ENCODE measurements at regions of chr5 and their contacts with region 1.

Region 1: DNA sequence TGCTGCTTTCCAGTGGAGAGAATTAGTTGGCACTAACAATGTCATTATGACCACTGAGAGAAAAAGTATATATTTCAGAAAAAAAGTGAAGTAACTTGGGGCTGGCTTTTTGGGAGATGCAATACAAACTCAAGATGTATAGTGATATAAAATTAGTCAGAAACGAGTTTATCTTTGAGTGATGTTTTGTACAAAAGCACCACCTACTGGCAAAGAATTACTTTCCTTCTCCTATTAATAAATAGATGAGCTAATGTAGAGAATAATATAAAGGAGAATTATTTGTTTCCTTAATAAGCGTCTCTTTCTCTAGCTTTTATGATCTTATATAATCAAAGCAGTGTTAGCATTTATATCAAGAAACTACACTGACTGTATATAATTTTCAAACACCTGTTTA is 158.8 kb downstream of the MEF2C start:
- H3K4me3 Mint-ChIP-seq: no peak overlapping the region
- H3K27ac Mint-ChIP-seq: no peak overlapping the region
- H3K4me1 Mint-ChIP-seq: no peaks in the 10 kb centered on the region
- H3K27me3 Mint-ChIP-seq: no peaks in the 10 kb centered on the region

Region 2: DNA sequence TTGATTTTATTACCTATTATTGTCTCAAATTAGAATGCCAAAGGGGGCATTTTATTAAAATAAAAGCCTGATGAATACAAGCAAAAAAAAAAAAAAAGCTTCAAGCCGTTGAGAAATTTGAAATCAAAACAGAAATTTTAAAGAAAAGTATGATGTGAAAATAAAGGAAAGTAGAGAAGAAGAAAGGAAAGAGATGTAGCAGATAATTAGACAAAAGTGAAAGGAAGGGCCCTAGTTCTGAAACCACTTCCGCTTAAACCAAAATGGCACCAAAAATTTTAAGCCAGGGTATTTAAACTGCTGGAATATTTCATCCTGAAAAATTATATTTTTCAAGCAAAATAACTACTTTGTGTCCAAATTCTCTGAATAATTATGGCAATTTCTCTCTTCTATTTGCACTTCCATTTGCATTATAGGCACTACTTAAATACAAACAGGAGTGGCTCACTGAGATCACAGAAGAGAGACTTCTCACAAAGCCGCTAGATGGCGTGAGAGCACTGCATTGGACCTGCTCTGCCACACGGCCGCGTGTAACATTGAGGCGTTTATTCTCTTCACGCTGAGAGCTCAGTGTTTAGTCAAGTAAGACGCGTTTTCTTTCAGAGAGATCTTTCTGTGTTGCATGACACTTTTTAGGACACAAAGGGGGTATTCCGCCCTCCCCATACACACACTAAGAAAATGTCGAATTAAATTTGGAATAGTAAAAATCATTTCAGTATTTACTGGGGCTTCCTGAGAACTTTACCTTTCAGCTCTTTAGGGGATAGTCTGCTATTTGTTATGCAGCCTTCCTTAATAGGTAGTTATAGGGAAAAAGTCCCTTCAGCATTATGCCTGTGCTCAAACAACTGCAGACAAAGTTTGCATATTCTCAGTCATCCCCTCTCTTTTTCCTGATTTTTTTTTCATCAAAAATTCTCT is 943.1 kb before region 1 on chr5:
- intact Hi-C with region 1: loop called (anchors 2 kb)
- H3K4me3 Mint-ChIP-seq: no peak overlapping the region
- H3K27ac Mint-ChIP-seq: no peak overlapping the region
- H3K4me1 Mint-ChIP-seq: no peaks in the 10 kb centered on the region
- H3K27me3 Mint-ChIP-seq: peaks cover 21% of the 10 kb centered on the region

Region 3: GRCh38 chr5:88675708-88676636 is 48.2 kb before region 1 on chr5:
- intact Hi-C with region 1: no loop called
- H3K4me3 Mint-ChIP-seq: peak overlapping the region; percentile 83
- H3K27ac Mint-ChIP-seq: no peak overlapping the region
- H3K4me1 Mint-ChIP-seq: peaks cover 69% of the 10 kb centered on the region
- H3K27me3 Mint-ChIP-seq: peaks cover 91% of the 10 kb centered on the region

Region 4: DNA sequence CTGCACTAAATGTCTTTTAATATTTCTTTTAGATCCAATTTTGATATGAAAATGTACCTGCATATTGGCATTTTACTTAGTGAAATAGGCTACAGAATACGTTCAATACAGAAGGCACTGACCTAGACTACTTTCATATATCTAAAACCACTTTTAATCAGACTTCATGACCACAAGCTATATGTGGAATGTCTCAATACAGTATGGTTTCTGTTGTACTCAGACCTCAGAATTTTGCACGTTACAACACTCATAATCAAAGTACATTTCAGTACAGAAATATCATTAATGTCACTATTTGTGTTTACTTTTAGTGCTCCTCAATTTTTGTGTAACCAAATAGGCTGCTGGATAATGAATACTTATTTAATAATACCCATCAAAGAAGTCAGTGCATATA is 84.0 kb after region 1 on chr5:
- intact Hi-C with region 1: no loop called
- H3K4me3 Mint-ChIP-seq: no peak overlapping the region
- H3K27ac Mint-ChIP-seq: no peak overlapping the region
- H3K4me1 Mint-ChIP-seq: peaks cover 20% of the 10 kb centered on the region
- H3K27me3 Mint-ChIP-seq: no peaks in the 10 kb centered on the region

Region 5: GRCh38 chr5:90274216-90274615 is 1550.0 kb after region 1 on chr5:
- intact Hi-C with region 1: loop called (anchors 2 kb)
- H3K4me3 Mint-ChIP-seq: no peak overlapping the region
- H3K27ac Mint-ChIP-seq: no peak overlapping the region
- H3K4me1 Mint-ChIP-seq: peaks cover 6% of the 10 kb centered on the region
- H3K27me3 Mint-ChIP-seq: no peaks in the 10 kb centered on the region